ENCODE measurements at regions of chr6 and their contacts with region 1.

Region 1: GRCh38 chr6:11653028-11653583 is 115.6 kb downstream of the TMEM170B start:
- DNase-seq: peak; percentile 30 to 68
- ATAC-seq: peak; percentile 59 to 64; a peak in 5 of 6 replicates
- H3K4me3 ChIP-seq: no peak overlapping the region
- H3K27ac ChIP-seq: peak overlapping the region; percentile 80 to 89
- H3K4me1 ChIP-seq: peaks cover 51% of the 10 kb centered on the region
- CTCF ChIP-seq: no peak
- EP300 ChIP-seq: no peak
- POLR2A ChIP-seq: no peak
- RAD21 ChIP-seq: no peak

Region 2: DNA sequence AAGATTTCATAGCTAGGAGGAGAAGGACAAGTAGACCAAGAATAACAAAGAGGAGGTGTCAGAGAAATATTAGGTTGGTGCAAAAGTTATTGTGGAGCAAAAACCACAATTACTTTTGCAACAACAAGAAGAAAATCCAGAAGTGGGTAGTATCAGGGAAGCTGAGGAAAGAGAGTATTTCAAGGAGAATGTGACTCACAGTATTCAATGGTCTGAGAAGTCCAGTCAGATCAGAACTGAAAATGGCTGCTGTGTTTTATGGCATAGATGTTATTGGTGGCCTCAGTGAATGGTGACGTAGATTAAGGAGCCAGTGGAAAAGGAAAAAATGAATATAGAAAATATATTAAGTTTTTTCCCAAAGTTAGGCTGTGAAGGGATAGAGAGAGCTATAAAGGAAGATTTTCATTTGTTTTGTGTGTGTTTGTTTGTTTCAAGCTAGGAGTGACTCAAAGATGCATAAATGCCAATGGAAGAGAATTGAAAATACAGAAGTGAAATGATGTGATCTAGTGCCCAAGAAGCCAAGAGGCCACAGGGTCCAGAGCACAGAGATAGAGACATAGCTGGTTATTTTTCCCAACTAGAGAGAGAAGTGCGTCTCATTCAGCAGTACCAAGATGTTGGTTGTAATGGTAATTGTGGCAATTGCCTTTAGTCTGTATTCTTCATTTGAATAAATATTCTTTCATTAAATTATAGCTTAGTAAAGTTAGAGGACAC is 12.7 kb after region 1 on chr6:
- CTCF ChIA-PET with region 1: interaction called, 12 read pairs
- POLR2A ChIA-PET with region 1: no interaction called
- DNase-seq: no peak
- ATAC-seq: no peak
- H3K4me3 ChIP-seq: no peak overlapping the region
- H3K27ac ChIP-seq: no peak overlapping the region
- H3K4me1 ChIP-seq: no peaks in the 10 kb centered on the region
- CTCF ChIP-seq: no peak
- EP300 ChIP-seq: no peak
- POLR2A ChIP-seq: no peak
- RAD21 ChIP-seq: no peak

Measured in A549 (cell line).